ENCODE measurements at regions of chr15 and their contacts with region 1.

Region 1: GRCh38 chr15:83734487-83734886 is 80.6 kb downstream of the ADAMTSL3 start:
- DNase-seq: no peak
- H3K4me3 Mint-ChIP-seq: no peak overlapping the region
- H3K27ac Mint-ChIP-seq: no peak overlapping the region
- H3K4me1 Mint-ChIP-seq: no peaks in the 10 kb centered on the region
- H3K27me3 Mint-ChIP-seq: no peaks in the 10 kb centered on the region

Region 2: GRCh38 chr15:83496766-83497525 is 237.5 kb before region 1 on chr15:
- intact Hi-C with region 1: no loop called
- DNase-seq: no peak
- H3K4me3 Mint-ChIP-seq: no peak overlapping the region
- H3K27ac Mint-ChIP-seq: no peak overlapping the region
- H3K4me1 Mint-ChIP-seq: no peaks in the 10 kb centered on the region
- H3K27me3 Mint-ChIP-seq: no peaks in the 10 kb centered on the region

Region 3: GRCh38 chr15:84023636-84024035 is 289.1 kb after region 1 on chr15:
- intact Hi-C with region 1: loop called (anchors 10 kb)
- DNase-seq: no peak
- H3K4me3 Mint-ChIP-seq: no peak overlapping the region
- H3K27ac Mint-ChIP-seq: no peak overlapping the region
- H3K4me1 Mint-ChIP-seq: no peaks in the 10 kb centered on the region
- H3K27me3 Mint-ChIP-seq: peaks cover 4% of the 10 kb centered on the region